Heart right ventricle (tissue), 16 donors: ENCODE measurements at regions of chr15 and their contacts with region 1.

Region 1: DNA sequence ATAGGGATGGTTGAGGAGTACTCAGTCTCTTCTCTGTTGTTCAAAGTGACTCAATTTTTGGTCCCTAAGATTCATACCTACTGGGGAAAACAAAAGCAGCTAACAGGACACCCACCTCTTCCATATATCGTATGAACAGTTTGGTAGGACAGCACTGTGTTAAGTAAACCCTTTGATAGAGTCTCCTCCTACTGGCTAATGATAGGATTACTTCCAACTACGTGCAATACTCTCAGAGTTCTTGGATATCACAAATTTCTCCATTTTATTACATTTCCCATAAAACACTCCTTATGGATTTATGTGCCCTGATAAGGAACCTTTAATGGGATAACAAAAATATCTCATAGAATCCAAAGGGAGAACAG is 200.2 kb upstream of the GOLGA6L4 start:
- DNase-seq: no peak
- ATAC-seq: peak in 5 of 8 donors; percentile 58 to 65 (median 61)
- H3K4me3 ChIP-seq: no peak overlapping the region
- H3K27ac ChIP-seq: no peak overlapping the region
- H3K4me1 ChIP-seq: no peaks in the 10 kb centered on the region
- H3K27me3 ChIP-seq: no peaks in the 10 kb centered on the region
- CTCF ChIP-seq: peak; percentile 20 to 59 (median 44)

Region 2: DNA sequence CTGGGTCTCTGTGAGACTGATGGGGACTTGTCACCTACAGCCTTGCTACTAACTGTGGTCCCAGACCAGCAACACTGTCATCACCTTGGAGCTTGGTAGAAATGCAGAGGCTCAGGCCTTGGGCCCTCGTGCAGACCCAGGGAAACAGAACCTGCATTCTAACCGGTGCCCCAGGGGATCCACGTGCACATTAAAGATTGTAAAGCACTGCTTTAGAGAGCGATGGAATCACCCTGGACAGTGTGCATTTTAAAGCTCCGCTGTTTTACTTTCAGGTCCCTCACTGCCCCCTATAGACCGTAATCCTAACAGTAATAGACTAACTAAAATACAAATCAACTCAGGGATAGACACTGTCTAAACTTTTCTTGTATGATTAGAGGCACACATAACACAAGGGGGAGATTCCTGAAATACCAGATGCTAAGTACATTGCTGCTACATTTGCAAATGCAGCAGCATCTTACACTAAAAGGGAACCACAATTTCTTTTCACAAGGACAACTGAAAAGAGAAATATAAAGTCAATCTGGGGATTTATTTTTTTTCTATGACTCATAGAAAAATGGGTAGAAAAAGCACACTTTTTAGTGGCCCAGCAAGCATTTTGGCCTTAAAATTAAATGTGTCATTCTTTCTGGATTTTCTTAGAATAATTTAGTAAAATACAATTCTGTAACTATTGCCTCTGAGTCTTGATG is 598.8 kb before region 1 on chr15:
- intact Hi-C with region 1: loop called in 2 of 10 experiments (anchors 10 kb)
- DNase-seq: no peak
- ATAC-seq: peak in 3 of 8 donors; percentile 57 to 74 (median 62)
- H3K4me3 ChIP-seq: no peak overlapping the region
- H3K27ac ChIP-seq: no peak overlapping the region
- H3K4me1 ChIP-seq: no peaks in the 10 kb centered on the region
- H3K27me3 ChIP-seq: peaks cover 0 to 43% (median 21%) of the 10 kb centered on the region in 7 donors
- CTCF ChIP-seq: peak in 7 of 9 donors; percentile 39 to 53 (median 48)

Region 3: GRCh38 chr15:83446904-83447709 is 588.3 kb before region 1 on chr15 and contains the start of gene SH3GL3:
- intact Hi-C with region 1: loop called in 1 of 10 experiments (anchors 10 kb)
- DNase-seq: peak; percentile 74 to 77
- ATAC-seq: peak; percentile 92 to 99 (median 96)
- H3K4me3 ChIP-seq: peak within 1 kb of the TSS; percentile 2 to 56 (median 50)
- H3K27ac ChIP-seq: no peak within 1 kb of the TSS
- H3K4me1 ChIP-seq: peaks cover 0 to 13% (median 8%) of the 10 kb centered on the region in 9 donors
- H3K27me3 ChIP-seq: peaks cover 0 to 53% (median 28%) of the 10 kb centered on the region in 7 donors
- CTCF ChIP-seq: peak in 5 of 9 donors; percentile 19 to 49 (median 35)
- total RNA-seq, gene SH3GL3: 0.13 to 0.17 TPM in 2 of 10 donors, not detected in the others

Region 4: GRCh38 chr15:83559310-83559966 is 475.9 kb before region 1 on chr15:
- intact Hi-C with region 1: loop called in 4 of 10 experiments (anchors 5 to 10 kb)
- DNase-seq: peak in 1 of 2 donors; percentile 41
- ATAC-seq: peak in 5 of 8 donors; percentile 44 to 67 (median 55)
- H3K4me3 ChIP-seq: no peak overlapping the region
- H3K27ac ChIP-seq: no peak overlapping the region
- H3K4me1 ChIP-seq: no peaks in the 10 kb centered on the region
- H3K27me3 ChIP-seq: peaks cover 0 to 11% (median 5%) of the 10 kb centered on the region in 7 donors
- CTCF ChIP-seq: peak; percentile 63 to 84 (median 81)

Region 5: GRCh38 chr15:83571820-83572707 is 463.3 kb before region 1 on chr15:
- intact Hi-C with region 1: loop called in 7 of 10 experiments (anchors 5 to 10 kb)
- DNase-seq: no peak
- ATAC-seq: no peak
- H3K4me3 ChIP-seq: no peak overlapping the region
- H3K27ac ChIP-seq: no peak overlapping the region
- H3K4me1 ChIP-seq: no peaks in the 10 kb centered on the region
- H3K27me3 ChIP-seq: peaks cover 0 to 4% (median 0%) of the 10 kb centered on the region in 7 donors
- CTCF ChIP-seq: peak; percentile 32 to 68 (median 61)

Region 6: DNA sequence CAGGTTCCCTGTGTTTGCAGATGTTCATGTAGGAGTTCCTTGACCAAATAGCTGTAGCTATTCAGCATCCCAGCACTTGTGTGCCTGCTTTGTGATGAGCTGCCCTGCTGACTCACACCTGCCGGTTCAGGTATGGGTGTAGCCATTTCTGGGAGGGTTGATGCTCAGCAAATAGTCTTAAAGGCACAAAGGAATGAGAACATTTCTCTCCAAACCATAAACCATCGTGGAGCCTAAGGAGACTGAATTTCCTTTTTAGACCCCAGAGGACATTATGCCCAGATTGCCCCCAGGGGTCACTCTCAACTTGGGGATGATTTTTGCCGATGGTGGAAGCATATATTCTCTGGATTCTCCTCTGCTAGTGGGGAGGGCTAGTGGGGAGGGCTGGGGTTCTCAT is 300.9 kb before region 1 on chr15:
- intact Hi-C with region 1: loop called in 6 of 10 experiments (anchors 2 to 10 kb)
- DNase-seq: no peak
- ATAC-seq: peak in 1 of 8 donors; percentile 62
- H3K4me3 ChIP-seq: no peak overlapping the region
- H3K27ac ChIP-seq: no peak overlapping the region
- H3K4me1 ChIP-seq: peaks cover 0 to 3% (median 0%) of the 10 kb centered on the region in 9 donors
- H3K27me3 ChIP-seq: no peaks in the 10 kb centered on the region
- CTCF ChIP-seq: peak in 6 of 9 donors; percentile 29 to 55 (median 40)